ENCODE measurements at regions of chr15 and their contacts with region 1.

Region 1: DNA sequence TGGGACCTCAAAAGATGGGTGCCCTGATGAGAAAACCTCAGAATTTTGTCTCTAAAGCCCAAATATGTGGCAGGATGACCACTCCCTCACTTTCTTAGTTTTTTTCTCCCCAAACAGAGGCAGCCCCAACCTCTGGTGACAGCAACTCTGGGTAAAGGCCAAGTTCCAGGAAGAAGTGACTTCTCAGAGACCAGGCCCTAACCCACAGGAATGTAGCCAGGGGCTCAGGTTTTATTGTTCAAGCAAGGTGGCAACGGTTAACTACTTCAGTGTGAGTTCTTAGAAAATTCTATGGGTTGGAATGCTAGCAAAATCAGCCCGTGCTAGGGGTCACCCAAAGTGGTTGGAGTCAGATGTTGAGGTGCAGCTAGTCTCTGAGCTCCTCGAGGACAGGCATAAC is 5.1 kb upstream of the DNAJA4 start:
- DNase-seq: no peak

Region 2: GRCh38 chr15:78093242-78094020 is 165.8 kb before region 1 on chr15:
- in situ Hi-C with region 1: no loop called
- DNase-seq: no peak

Region 3: GRCh38 chr15:78204351-78205309 is 54.6 kb before region 1 on chr15:
- in situ Hi-C with region 1: no loop called
- DNase-seq: peak; percentile 86

Region 4: DNA sequence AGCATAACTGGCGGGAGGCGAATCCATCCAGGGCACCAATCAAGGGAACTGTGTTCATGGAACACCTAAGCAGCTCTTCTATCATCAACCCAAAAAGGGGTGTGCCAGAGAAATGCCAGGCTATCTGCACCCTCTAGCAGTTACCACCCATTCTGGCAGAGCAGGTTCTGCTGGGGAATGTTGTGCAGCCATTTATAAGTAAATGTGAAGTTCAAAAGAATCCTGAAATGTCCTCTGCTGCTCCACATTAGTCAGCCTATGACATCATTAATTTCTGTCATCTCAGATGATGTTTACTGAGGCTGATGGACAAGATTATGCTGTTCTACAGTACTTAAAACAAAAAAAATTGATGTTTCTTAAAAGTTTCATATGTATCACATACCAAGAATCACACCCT is 32.5 kb after region 1 on chr15:
- in situ Hi-C with region 1: loop called (anchors 5 kb)
- DNase-seq: no peak

Region 5: DNA sequence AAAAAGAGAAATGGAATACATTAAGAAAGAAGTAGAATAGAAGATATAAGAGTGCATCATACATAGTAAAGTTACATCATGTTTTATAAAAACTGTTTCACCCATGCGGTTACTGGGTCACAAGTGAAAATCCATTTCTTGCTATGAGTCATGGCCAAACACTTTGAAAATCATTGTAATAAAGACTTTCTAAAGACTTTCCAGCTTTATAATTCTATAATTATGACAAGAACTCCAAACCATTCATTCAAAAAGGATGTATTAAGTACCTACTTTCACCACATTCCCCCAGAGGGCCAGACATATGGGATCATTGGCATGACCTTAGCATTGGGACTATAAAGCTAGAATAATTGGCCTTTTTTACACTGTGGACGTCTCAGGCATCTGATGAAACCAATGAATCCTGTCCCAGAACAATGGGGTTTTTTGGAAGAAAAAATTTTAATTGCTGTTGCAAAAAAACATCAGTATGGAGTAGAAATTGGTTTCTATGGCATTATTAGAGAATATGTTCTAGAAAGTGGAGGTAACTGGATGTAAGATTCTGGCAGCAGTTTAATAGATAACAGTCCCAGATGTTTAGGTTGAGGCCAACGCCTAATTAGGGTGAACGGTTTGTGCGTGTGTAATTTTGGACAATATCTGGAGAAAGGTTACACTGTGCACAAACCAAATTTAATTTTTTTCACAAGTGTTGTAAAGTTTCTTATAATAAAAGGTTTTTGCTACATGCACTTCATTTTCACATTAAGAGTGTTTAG is 43.5 kb after region 1 on chr15:
- in situ Hi-C with region 1: no loop called
- DNase-seq: peak; percentile 100

Region 6: GRCh38 chr15:78449220-78449999 is 190.2 kb after region 1 on chr15:
- in situ Hi-C with region 1: no loop called
- DNase-seq: no peak